Activated naive CD4-positive, alpha-beta T cell treated with anti-CD3 and anti-CD28 coated beads for 36 hours (primary cell): ENCODE measurements at regions of chr2 and their contacts with region 1.

Region 1: DNA sequence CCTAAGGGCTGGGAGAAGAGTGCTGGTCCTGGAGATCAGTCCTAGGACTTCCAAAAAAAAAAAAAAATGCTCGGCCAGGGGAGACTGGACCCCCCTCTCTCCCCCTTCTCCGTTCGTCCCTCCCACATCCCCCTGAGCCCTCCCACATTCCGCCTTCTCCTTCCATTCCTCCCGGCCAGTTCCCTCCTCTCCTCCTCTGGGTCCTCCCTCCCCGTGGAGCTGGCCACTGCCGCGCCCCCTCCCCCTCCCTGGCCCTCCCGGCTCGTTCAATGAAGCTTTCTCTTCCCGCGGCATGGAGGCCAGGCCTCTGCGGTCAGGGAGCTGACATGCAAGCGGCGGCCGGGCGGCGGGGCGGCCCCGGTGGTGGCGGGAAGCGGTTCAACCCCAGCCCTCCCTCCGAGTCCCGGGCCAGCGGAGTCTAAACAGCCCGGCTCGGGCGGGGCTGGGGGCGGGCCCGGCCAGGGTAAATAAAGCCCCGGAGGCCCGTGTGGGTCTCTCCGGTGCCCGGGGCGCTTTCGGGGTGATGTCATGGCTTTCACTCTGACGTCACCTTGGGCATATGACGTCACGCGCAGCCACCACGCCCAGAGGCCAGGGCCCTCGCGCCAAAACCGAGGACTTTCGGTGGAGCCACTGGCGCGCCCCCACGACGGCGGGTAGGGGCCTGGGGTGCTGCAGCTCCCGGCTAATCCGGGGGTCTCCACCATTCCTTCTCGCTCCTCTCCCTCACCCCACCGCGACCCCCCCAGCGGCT is at the start of gene LOXL3:
- DNase-seq: peak; percentile 82
- H3K4me3 Mint-ChIP-seq: peak within 1 kb of the TSS; percentile 94
- H3K27ac Mint-ChIP-seq: peak within 1 kb of the TSS; percentile 88
- H3K4me1 Mint-ChIP-seq: peaks cover 4% of the 10 kb centered on the region
- H3K27me3 Mint-ChIP-seq: peaks cover 17% of the 10 kb centered on the region
- total RNA-seq, gene LOXL3: 0.35 to 0.41 TPM

Region 2: DNA sequence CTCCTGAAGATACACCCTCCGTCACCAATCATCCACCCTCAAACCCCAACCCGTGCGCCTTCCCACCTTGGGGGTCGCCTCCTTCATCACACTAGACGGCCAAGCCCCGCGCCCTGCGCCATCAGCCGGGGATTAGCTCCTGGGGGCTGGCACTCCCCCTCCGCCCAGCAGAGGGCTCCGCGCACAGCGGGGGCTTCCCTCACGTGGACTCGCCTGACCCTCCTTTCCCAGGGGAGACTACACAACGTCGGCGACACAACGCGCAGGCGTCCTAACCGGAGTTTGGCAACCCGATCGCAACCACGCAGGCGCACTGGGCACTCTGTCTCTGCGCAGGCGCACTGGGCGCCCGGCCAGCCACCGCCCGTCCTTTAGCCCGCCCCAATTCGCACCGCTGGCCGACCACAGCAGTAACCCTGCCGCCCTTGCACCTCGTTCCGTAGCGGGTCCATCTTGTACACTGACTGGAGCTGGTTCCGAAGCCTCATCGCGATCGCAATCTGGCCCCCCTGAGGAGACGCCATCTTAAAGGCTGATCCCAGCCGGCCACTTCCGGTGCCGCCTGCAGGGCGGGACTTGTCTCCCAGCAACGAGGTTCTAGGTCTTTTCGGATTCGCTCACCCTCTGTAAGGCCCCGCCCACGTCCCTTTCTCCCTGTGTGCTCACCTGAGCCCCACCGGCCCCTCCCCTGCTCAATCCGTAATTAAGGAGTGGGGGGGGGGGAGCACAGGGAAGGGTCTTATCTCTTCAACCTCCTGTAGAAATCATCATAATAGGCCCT is 46.7 kb before region 1 on chr2 and contains the start of gene PCGF1:
- CTCF ChIA-PET with region 1: no interaction called
- intact Hi-C with region 1: loop called (anchors 2 kb)
- DNase-seq: peak; percentile 99
- H3K4me3 Mint-ChIP-seq: peak within 1 kb of the TSS; percentile 91
- H3K27ac Mint-ChIP-seq: peak within 1 kb of the TSS; percentile 98
- H3K4me1 Mint-ChIP-seq: peaks cover 40% of the 10 kb centered on the region
- H3K27me3 Mint-ChIP-seq: peaks cover 41% of the 10 kb centered on the region
- total RNA-seq, gene PCGF1: 21.1 to 24.4 TPM

Region 3: GRCh38 chr2:74566754-74567085 is 12.7 kb after region 1 on chr2:
- CTCF ChIA-PET with region 1: interaction called, 5 read pairs
- intact Hi-C with region 1: loop called (anchors 1 kb)
- DNase-seq: no peak
- H3K4me3 Mint-ChIP-seq: peak overlapping the region; percentile 31
- H3K27ac Mint-ChIP-seq: peak overlapping the region; percentile 87
- H3K4me1 Mint-ChIP-seq: peaks cover 35% of the 10 kb centered on the region
- H3K27me3 Mint-ChIP-seq: peaks cover 11% of the 10 kb centered on the region